Naive thymus-derived CD4-positive, alpha-beta T cell (primary cell): ENCODE measurements at regions of chr6 and their contacts with region 1.

Region 1: GRCh38 chr6:37381579-37381978 is 27.8 kb downstream of the RNF8 start:
- DNase-seq: peak in 7 of 9 donors; percentile 18 to 48 (median 35)
- ATAC-seq: peak; percentile 61
- H3K4me3 ChIP-seq: no peak overlapping the region
- H3K4me3 Mint-ChIP-seq: no peak overlapping the region
- H3K27ac ChIP-seq: no peak overlapping the region
- H3K27ac Mint-ChIP-seq: peak overlapping the region in 1 of 9 donors; percentile 19
- H3K4me1 ChIP-seq: no peaks in the 10 kb centered on the region
- H3K4me1 Mint-ChIP-seq: peaks cover 0 to 3% (median 0%) of the 10 kb centered on the region in 7 donors
- H3K27me3 ChIP-seq: no peaks in the 10 kb centered on the region
- H3K27me3 Mint-ChIP-seq: no peaks in the 10 kb centered on the region

Region 2: DNA sequence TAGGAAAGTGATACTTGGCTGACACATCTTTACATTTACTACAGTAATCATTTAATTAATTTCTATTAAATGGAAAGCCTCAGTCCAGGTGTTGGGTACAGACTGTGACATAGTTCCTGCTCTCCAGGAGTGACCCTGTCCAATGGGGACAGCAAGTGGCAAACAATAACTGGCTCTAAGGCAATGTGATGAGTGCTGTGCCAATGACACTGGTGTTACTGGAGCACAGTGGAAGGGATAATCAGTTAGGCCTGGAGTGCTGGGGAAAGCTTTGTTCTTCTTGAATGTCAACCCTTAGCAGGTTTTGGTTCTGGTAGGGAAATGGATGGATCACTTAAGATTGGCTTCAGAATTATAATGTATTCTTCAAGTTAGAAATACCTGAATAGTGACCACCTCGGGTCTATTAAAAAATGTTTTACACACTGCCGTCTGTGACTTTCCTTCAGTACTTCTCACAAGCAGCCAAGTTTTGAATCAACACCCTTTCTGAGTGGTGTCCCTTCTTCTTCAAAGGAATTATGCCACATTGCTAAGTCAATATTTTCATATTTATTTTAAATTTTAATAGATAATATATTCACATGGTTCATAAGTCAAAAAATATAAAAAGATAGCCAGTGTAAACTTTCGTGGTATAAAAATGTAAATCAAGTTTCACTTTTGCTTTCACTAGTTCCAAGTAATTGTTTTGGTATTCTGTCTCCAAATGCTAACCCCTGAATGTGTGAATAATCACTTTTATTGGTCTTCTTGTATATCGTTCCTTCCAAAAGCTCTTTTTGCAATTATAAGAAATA is 61.0 kb after region 1 on chr6:
- CTCF ChIA-PET with region 1: no interaction called
- POLR2A ChIA-PET with region 1: no interaction called
- intact Hi-C with region 1: loop called in 1 of 2 experiments (anchors 2 kb)
- DNase-seq: peak in 3 of 9 donors; percentile 2 to 7 (median 7)
- ATAC-seq: peak; percentile 22
- H3K4me3 ChIP-seq: peak overlapping the region; percentile 21
- H3K4me3 Mint-ChIP-seq: peak overlapping the region; percentile 65 to 90 (median 82)
- H3K27ac ChIP-seq: peak overlapping the region; percentile 59
- H3K27ac Mint-ChIP-seq: peak overlapping the region; percentile 58 to 95 (median 90)
- H3K4me1 ChIP-seq: peaks cover 6 to 21% of the 10 kb centered on the region in 2 donors
- H3K4me1 Mint-ChIP-seq: peaks cover 12 to 52% (median 37%) of the 10 kb centered on the region in 7 donors
- H3K27me3 ChIP-seq: no peaks in the 10 kb centered on the region
- H3K27me3 Mint-ChIP-seq: no peaks in the 10 kb centered on the region

Region 3: GRCh38 chr6:37566111-37566949 is 184.8 kb after region 1 on chr6:
- CTCF ChIA-PET with region 1: interaction called, 5 read pairs
- POLR2A ChIA-PET with region 1: no interaction called
- intact Hi-C with region 1: loop called (anchors 1 kb)
- DNase-seq: peak; percentile 45 to 86 (median 70)
- ATAC-seq: peak; percentile 93
- H3K4me3 ChIP-seq: peak overlapping the region; percentile 52
- H3K4me3 Mint-ChIP-seq: peak overlapping the region in 9 of 10 donors; percentile 37 to 80 (median 63)
- H3K27ac ChIP-seq: no peak overlapping the region
- H3K27ac Mint-ChIP-seq: peak overlapping the region in 2 of 9 donors; percentile 8 to 12
- H3K4me1 ChIP-seq: peaks cover 0 to 4% of the 10 kb centered on the region in 2 donors
- H3K4me1 Mint-ChIP-seq: peaks cover 6 to 21% (median 12%) of the 10 kb centered on the region in 7 donors
- H3K27me3 ChIP-seq: no peaks in the 10 kb centered on the region
- H3K27me3 Mint-ChIP-seq: peaks cover 3 to 28% (median 11%) of the 10 kb centered on the region in 5 donors